ENCODE measurements at regions of chr9 and their contacts with region 1.

Region 1: GRCh38 chr9:131046581-131047202 is 37.7 kb downstream of the LAMC3 start:
- DNase-seq: peak; percentile 86
- ATAC-seq: peak; percentile 86

Region 2: DNA sequence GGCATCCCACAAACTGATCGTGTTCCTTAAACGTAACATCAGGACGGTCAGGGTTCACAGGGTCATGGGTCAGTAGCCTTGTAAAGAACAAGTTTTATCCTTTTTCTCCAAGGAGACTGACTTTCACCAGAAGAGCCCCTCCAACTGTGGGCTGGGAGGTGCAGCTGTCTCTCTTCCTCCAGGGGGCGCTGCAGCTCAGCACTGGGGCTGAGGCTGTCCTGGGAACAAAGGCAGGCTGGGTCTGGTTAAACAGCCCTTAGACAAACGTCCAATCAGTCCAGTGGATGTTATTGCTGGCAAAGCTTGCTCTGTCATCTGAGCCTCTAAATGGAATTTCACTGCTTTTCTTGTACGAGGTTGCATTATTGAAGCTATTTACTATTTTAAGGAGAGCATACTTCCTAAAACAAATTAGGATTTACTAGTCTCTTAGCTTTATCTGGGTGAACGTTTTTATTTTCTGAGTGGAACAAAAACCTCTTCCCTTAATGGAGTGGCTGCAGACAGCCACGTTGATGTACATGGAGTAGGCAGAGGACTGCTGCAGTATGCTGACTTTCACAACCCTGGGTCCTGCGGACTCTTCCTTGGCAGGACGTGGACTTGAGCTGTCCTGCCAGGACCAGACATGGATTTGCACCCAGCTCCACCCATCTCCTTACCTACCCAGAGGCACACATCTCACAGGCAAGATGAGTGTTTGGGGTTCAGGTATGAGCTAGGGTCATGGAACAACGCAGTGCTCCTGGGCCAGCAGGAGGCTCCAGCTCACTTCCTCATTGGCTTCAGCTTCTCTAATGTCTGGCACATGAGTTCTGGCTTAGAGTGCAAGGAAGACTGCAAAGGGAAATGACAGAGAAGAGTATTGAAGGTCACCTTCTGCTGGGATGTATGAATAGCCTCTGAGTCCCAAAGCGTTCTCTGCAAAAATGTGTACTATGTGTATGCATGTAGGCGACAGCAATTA is 345.4 kb before region 1 on chr9:
- intact Hi-C with region 1: loop called (anchors 2 kb)
- DNase-seq: peak; percentile 86
- ATAC-seq: peak; percentile 86

Region 3: GRCh38 chr9:130866474-130866965 is 180.2 kb before region 1 on chr9:
- intact Hi-C with region 1: loop called (anchors 2 kb)
- DNase-seq: peak; percentile 44
- ATAC-seq: no peak

Region 4: GRCh38 chr9:130940693-130941576 is 105.8 kb before region 1 on chr9:
- intact Hi-C with region 1: loop called (anchors 10 kb)
- DNase-seq: peak; percentile 83
- ATAC-seq: peak; percentile 64

Region 5: GRCh38 chr9:131008909-131009618 is 37.6 kb before region 1 on chr9 and contains the start of gene LAMC3:
- intact Hi-C with region 1: loop called (anchors 5 kb)
- DNase-seq: no peak
- ATAC-seq: no peak
- total RNA-seq, gene LAMC3: 0.22 TPM

Region 6: GRCh38 chr9:131539223-131539923 is 492.7 kb after region 1 on chr9:
- intact Hi-C with region 1: no loop called
- DNase-seq: no peak
- ATAC-seq: no peak

Measured in Right ventricle myocardium inferior (tissue), 1 donor.